ENCODE measurements at regions of chr6 and their contacts with region 1.

Region 1: GRCh38 chr6:160930547-160931377 is 60.8 kb upstream of the MAP3K4 start:
- DNase-seq: peak; percentile 75 to 86 (median 79)
- H3K4me3 ChIP-seq: peak overlapping the region in 2 of 4 donors; percentile 55 to 56
- H3K27ac ChIP-seq: no peak overlapping the region
- H3K4me1 ChIP-seq: peaks cover 10 to 16% of the 10 kb centered on the region in 2 donors
- H3K27me3 ChIP-seq: no peaks in the 10 kb centered on the region
- CTCF ChIP-seq: peak; percentile 86 to 94 (median 90)
- POLR2A ChIP-seq: no peak

Region 2: GRCh38 chr6:160986851-160987250 is 56.1 kb after region 1 on chr6:
- intact Hi-C with region 1: loop called (anchors 5 to 10 kb)
- DNase-seq: peak in 1 of 7 donors; percentile 8
- H3K4me3 ChIP-seq: no peak overlapping the region
- H3K27ac ChIP-seq: no peak overlapping the region
- H3K4me1 ChIP-seq: peaks cover 4% of the 10 kb centered on the region in 2 donors
- H3K27me3 ChIP-seq: no peaks in the 10 kb centered on the region
- CTCF ChIP-seq: no peak
- POLR2A ChIP-seq: no peak

Region 3: GRCh38 chr6:160992061-160992979 is 61.6 kb after region 1 on chr6:
- intact Hi-C with region 1: loop called (anchors 5 to 10 kb)
- DNase-seq: peak; percentile 48 to 72 (median 55)
- H3K4me3 ChIP-seq: peak overlapping the region; percentile 33 to 98 (median 88)
- H3K27ac ChIP-seq: peak overlapping the region; percentile 85 to 92 (median 91)
- H3K4me1 ChIP-seq: peaks cover 4 to 13% of the 10 kb centered on the region in 2 donors
- H3K27me3 ChIP-seq: no peaks in the 10 kb centered on the region
- CTCF ChIP-seq: peak; percentile 26 to 56 (median 50)
- POLR2A ChIP-seq: peak in 1 of 2 donors; percentile 67

Region 4: DNA sequence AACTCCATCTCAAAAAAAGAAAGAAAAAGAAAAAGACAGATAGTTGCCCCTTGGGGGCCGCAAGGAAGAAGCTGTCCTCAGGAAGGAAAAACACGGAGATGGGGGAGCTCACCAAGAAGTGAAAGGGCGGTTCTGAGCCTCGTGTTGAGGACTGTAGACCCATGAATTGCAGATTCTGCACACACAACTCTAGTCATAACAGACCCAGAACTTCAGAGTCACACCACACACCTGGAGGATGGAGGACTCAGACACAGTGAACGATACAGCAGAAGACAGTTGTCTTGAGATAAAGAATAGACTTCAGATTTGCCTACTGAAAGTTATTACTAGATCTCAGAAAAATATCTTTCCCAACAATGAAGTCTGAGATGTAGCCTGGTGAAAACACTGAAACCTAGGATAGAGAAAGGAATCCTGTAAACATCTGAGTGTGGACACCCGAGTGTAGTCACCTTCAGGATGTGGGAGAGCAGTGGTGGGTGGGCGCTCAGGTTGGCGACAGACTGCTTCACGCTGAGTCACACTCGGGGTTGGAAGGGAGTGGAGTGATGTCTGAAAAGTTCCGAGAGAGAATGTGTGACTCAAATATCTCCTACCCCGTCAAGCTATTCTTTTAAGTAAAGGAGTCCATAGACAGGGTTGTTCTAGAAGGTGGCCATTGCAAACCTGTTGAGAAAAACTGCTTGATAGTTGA is 149.0 kb after region 1 on chr6:
- intact Hi-C with region 1: loop called in 1 of 2 experiments (anchors 10 kb)
- DNase-seq: no peak
- H3K4me3 ChIP-seq: no peak overlapping the region
- H3K27ac ChIP-seq: no peak overlapping the region
- H3K4me1 ChIP-seq: no peaks in the 10 kb centered on the region
- H3K27me3 ChIP-seq: no peaks in the 10 kb centered on the region
- CTCF ChIP-seq: no peak
- POLR2A ChIP-seq: no peak

Region 5: DNA sequence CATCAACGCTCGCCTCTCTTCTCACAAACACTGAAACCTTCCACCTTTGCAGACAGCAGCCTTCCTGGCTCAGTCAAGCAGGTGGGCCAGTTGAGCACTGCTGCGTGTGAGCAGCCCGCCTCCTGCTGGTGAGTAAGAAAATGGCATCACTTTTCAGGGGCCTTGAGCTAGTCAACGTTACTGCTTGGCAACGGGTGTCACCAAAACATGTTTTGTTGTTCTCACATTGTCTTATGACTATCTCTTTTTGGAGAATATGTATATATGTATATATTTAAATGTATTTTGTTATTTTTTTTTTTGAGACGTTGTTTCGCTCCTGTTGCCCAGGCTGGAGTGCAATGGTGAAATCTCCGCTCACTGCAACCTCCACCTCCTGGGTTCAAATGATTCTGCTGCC is 440.1 kb after region 1 on chr6:
- intact Hi-C with region 1: loop called (anchors 2 to 5 kb)
- DNase-seq: peak; percentile 41 to 79 (median 51)
- H3K4me3 ChIP-seq: no peak overlapping the region
- H3K27ac ChIP-seq: no peak overlapping the region
- H3K4me1 ChIP-seq: peaks cover 0 to 4% of the 10 kb centered on the region in 2 donors
- H3K27me3 ChIP-seq: no peaks in the 10 kb centered on the region
- CTCF ChIP-seq: peak; percentile 71 to 89 (median 85)
- POLR2A ChIP-seq: no peak

Region 6: DNA sequence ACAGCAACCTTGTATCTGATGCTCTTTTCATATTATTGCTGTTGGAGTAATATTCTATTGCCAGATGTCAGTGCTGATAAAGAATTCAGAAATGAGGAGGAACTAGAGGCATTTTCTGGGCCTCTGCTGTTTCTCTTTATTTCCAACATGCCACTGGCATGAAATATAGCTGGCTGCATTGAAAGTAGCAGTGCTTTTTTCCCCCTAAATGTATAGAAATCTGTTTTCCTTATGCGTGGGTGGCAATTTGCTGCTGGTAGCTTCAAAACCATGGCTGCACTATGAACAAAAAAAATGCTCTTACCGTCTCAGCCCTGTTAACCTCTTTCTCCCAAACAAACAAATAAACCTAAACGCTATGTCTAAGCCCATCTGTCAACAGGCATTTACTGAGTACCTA is 785.4 kb after region 1 on chr6:
- intact Hi-C with region 1: no loop called
- DNase-seq: no peak
- H3K4me3 ChIP-seq: no peak overlapping the region
- H3K27ac ChIP-seq: no peak overlapping the region
- H3K4me1 ChIP-seq: no peaks in the 10 kb centered on the region
- H3K27me3 ChIP-seq: no peaks in the 10 kb centered on the region
- CTCF ChIP-seq: no peak
- POLR2A ChIP-seq: no peak